ENCODE measurements at regions of chrX and their contacts with region 1.

Region 1: DNA sequence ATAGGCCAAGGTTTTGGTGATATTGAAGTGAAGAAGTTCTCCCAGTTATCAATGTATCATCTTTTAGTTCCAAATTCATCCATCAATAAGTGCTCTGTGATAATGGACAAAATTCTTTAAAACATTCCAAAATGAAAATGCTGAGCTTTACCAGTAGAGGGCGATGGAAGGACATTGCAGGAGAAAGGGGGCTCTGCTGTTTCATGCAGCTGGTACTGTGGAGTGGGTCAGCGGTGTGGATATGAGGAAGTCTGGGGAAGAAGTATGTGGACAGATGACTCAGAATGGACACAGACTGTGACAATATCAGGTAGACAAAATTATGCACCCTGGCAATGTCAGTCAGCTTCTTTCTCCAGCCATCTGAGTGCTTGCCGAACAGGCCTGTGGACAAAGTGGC is 46.6 kb upstream of the HS6ST2 start:
- DNase-seq: peak; percentile 4 to 23 (median 8)
- ATAC-seq: peak; percentile 51; the same call in 2 of the 3 replicates
- H3K4me3 ChIP-seq: no peak overlapping the region
- H3K27ac ChIP-seq: no peak overlapping the region
- H3K4me1 ChIP-seq: no peaks in the 10 kb centered on the region
- H3K27me3 ChIP-seq: no peaks in the 10 kb centered on the region
- CTCF ChIP-seq: peak; percentile 42 to 65 (median 63); a peak in 5 of 6 replicates
- EP300 ChIP-seq: no peak
- POLR2A ChIP-seq: no peak
- RAD21 ChIP-seq: peak; percentile 22 to 51; a peak in 3 of 4 replicates

Region 2: GRCh38 chrX:133068461-133068860 is 63.4 kb after region 1 on chrX:
- CTCF ChIA-PET with region 1: no interaction called
- POLR2A ChIA-PET with region 1: no interaction called
- in situ Hi-C with region 1: no loop called
- intact Hi-C with region 1: no loop called
- DNase-seq: no peak
- ATAC-seq: no peak
- H3K4me3 ChIP-seq: no peak overlapping the region
- H3K27ac ChIP-seq: no peak overlapping the region
- H3K4me1 ChIP-seq: no peaks in the 10 kb centered on the region
- H3K27me3 ChIP-seq: no peaks in the 10 kb centered on the region
- CTCF ChIP-seq: no peak
- EP300 ChIP-seq: no peak
- POLR2A ChIP-seq: no peak
- RAD21 ChIP-seq: no peak

Region 3: GRCh38 chrX:133215747-133216146 is 210.7 kb after region 1 on chrX:
- CTCF ChIA-PET with region 1: interaction called, 3 read pairs
- POLR2A ChIA-PET with region 1: no interaction called
- in situ Hi-C with region 1: no loop called
- intact Hi-C with region 1: loop called (anchors 1 kb)
- DNase-seq: peak in 3 of 4 experiments; percentile 4 to 29 (median 12)
- ATAC-seq: peak; percentile 49; the same call in 1 of the 3 replicates
- H3K4me3 ChIP-seq: no peak overlapping the region
- H3K27ac ChIP-seq: no peak overlapping the region
- H3K4me1 ChIP-seq: no peaks in the 10 kb centered on the region
- H3K27me3 ChIP-seq: peaks cover 0 to 9% of the 10 kb centered on the region in 2 experiments; a peak in 2 of 5 replicates
- CTCF ChIP-seq: peak in 2 of 3 experiments; percentile 20 to 43; a peak in 3 of 6 replicates
- EP300 ChIP-seq: no peak
- POLR2A ChIP-seq: no peak
- RAD21 ChIP-seq: peak in 1 of 2 experiments; percentile 43; a peak in 2 of 4 replicates

Measured in K562 (cell line).